ENCODE measurements at regions of chr13 and their contacts with region 1.

Region 1: GRCh38 chr13:22278336-22278929 is 607.6 kb downstream of the FGF9 start:
- DNase-seq: peak in 1 of 2 donors; percentile 76
- ATAC-seq: peak; percentile 73
- H3K4me3 ChIP-seq: no peak overlapping the region
- H3K27ac ChIP-seq: no peak overlapping the region
- H3K4me1 ChIP-seq: no peaks in the 10 kb centered on the region
- H3K27me3 ChIP-seq: no peaks in the 10 kb centered on the region

Region 2: DNA sequence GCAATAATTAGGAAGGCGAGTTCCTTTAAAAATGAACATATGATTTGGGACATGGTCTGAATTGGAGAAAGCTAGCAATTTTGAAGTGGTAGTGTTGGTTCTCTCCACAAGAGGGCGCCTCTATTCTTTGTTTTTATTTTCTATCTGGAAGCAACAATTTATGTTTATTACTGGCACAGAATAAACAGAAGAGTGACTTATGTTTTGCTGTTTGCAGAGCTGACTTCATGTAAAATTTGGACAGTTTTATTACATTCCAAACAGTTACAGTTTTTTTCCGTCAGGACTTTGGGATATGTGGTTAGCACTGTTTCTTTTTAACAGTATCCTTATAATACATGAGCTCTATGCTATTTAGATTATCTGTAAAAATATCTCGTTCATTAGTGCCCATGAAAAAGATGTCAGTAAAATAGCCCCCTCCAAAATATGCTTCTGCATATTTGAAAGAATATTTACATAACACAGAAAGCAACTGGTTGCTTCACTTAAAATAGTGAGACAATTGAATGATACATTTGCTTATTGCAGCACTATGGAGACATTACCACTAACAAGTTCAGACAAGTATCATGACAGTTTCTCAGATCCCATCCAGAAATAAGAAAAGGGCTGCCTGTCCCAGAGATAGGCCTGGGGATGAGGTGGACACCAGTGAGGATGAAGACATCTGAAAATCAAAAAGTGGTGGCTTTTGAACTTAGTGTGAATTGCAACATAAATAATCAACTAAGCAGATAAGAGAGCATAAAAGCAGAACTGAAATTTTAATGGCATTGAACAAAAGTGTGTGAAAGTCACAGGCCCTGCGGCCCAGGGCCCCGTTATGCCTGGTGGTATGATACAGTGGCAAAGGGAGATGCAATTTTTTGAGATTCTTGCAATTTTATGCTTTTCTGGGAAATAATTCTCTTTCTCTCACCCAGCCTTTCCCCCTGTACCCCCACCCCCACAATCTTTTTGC is 639.8 kb before region 1 on chr13:
- intact Hi-C with region 1: loop called in 1 of 2 experiments (anchors 5 kb)
- DNase-seq: no peak
- ATAC-seq: peak; percentile 59
- H3K4me3 ChIP-seq: no peak overlapping the region
- H3K27ac ChIP-seq: no peak overlapping the region
- H3K4me1 ChIP-seq: no peaks in the 10 kb centered on the region
- H3K27me3 ChIP-seq: no peaks in the 10 kb centered on the region

Region 3: DNA sequence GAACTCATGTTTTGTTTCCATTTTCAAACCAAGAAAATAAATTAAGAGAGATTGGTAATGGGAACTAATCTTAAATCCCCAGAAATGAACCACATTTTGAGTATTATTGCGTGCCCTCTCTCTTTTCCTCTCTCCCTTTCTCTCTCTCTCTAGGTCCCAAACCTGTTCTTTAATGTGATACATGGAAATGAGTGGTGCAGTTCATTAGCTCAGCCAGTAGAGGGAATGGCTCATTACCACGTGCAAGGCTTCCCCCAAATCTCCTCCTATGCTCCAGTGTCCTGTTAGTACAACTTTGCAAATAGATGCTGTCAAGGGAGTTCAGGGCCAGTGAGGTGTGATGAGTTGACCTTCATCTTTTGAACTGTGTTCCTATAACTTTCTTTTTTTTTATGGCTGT is 429.1 kb before region 1 on chr13:
- intact Hi-C with region 1: loop called in 1 of 2 experiments (anchors 10 kb)
- DNase-seq: no peak
- ATAC-seq: peak; percentile 85
- H3K4me3 ChIP-seq: no peak overlapping the region
- H3K27ac ChIP-seq: no peak overlapping the region
- H3K4me1 ChIP-seq: no peaks in the 10 kb centered on the region
- H3K27me3 ChIP-seq: no peaks in the 10 kb centered on the region

Region 4: DNA sequence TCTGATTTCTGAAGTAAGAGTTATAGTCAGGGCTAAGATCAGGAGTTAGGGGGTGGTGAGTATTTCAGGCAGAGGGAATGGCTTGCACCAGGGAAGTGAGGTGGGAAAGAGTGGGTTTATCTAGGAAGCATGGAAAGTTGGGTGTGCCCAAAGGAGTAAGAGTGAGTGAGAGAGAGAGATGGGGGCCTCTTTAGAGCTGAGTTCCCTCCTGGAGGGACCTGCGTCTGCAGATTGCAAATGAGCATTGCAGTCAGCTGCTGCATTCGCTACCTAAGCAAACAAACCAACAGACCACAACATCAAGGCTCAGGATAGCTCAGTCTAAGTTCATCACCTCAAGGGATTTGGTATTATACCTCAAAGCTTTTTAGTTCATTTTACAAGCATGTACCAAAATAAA is 201.8 kb before region 1 on chr13:
- intact Hi-C with region 1: no loop called
- DNase-seq: no peak
- ATAC-seq: no peak
- H3K4me3 ChIP-seq: no peak overlapping the region
- H3K27ac ChIP-seq: no peak overlapping the region
- H3K4me1 ChIP-seq: no peaks in the 10 kb centered on the region
- H3K27me3 ChIP-seq: no peaks in the 10 kb centered on the region

Region 5: GRCh38 chr13:22103044-22104027 is 175.1 kb before region 1 on chr13:
- intact Hi-C with region 1: loop called in 1 of 2 experiments (anchors 10 kb)
- DNase-seq: no peak
- ATAC-seq: no peak
- H3K4me3 ChIP-seq: no peak overlapping the region
- H3K27ac ChIP-seq: no peak overlapping the region
- H3K4me1 ChIP-seq: no peaks in the 10 kb centered on the region
- H3K27me3 ChIP-seq: no peaks in the 10 kb centered on the region

Region 6: DNA sequence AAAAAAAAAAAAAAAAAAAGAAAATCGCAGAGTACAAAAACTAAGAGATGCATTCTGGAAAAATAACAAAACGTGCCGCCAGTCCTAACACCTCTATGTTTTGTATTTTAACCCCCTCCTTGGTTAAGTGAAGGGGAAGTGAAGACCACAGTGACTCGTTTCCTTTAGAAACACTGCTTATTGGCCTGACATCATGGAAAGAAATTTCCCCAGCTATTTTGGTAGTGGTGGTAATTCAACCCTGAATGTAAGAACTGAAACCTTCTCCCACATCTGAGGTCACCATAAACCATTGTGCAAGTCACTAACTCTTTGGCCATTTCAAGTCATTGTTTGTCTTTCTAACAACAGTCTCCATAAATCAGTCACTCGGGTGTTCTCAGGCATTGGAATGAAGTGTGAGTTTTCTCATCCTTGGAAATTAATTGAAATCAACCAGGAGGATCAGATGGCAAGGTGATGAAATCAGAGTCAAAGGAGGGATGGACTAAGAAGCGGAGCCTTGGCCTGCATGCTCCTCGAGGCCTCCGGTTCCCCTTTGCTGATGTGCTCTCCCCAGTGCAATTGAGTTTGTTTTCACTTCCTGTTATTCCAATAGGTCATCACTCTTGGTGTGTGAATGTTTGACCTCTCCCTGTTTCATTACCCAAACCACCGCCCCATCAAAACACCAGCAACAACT is 163.7 kb before region 1 on chr13:
- intact Hi-C with region 1: loop called (anchors 10 kb)
- DNase-seq: peak in 1 of 2 donors; percentile 62
- ATAC-seq: peak; percentile 30
- H3K4me3 ChIP-seq: no peak overlapping the region
- H3K27ac ChIP-seq: no peak overlapping the region
- H3K4me1 ChIP-seq: peaks cover 3 to 4% of the 10 kb centered on the region in 2 donors
- H3K27me3 ChIP-seq: no peaks in the 10 kb centered on the region